HEK293 (cell line): ENCODE measurements at regions of chr7 and their contacts with region 1.

Region 1: GRCh38 chr7:2566890-2567678 is 8.3 kb downstream of the IQCE start:
- H3K4me3 ChIP-seq: no peak overlapping the region
- H3K27ac ChIP-seq: no peak overlapping the region
- H3K4me1 ChIP-seq: no peaks in the 10 kb centered on the region
- CTCF ChIP-seq: no peak

Region 2: DNA sequence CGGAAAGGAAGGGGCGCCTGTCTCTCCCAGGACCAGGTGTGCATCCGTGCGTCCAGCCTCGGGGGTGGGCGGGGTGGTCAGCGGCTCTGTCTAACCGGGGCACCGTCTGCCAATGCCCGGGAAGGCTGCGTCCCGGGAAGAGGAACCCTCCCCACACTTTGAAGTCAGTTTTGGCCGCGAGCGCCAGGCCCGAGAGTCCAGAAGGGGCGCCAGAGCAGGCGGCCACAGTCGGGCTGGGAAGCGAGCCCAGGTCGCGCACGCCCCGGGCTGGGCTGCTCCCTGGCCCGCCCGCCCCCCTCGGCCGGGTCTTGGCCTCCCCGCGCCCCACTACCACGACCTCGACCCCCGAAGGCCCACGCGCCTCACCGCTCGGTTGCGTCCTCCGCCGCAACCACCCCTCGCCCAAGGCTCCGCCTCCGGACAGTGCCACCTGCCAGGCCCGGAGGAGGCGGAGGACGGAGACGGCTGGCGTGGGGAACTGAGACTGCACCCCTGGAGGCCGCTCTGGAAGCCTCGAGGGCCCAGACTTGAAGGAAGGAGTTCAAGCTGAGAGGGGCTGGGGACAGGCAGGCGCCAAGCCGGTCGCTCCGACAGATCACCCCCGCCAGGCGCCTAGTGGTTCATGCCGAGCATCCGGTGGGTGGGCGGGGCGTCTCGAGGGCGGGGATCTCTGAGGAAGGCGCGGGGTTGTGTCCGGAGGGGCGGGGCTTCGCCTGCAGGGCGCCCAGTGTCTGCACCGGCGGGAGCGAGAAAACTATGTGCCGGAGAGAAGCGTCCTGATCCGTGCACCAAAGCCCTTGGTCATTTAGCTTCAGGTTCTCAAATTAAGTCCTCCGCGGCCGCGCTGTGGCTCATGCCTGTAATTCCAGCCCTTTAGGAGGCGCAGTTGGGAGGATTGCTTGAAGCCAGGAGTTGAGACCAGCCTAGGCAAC is 11.7 kb before region 1 on chr7 and contains the start of gene BRAT1:
- CTCF ChIA-PET with region 1: interaction called, 4 read pairs
- POLR2A ChIA-PET with region 1: interaction called, 14 read pairs
- H3K4me3 ChIP-seq: peak within 1 kb of the TSS; percentile 88
- H3K27ac ChIP-seq: peak within 1 kb of the TSS; percentile 100
- H3K4me1 ChIP-seq: peaks cover 2% of the 10 kb centered on the region; the same call in 1 of the 2 replicates
- CTCF ChIP-seq: peak; percentile 6; the same call in 1 of the 2 replicates